Keratinocyte (primary cell): ENCODE measurements at regions of chr11 and their contacts with region 1.

Region 1: DNA sequence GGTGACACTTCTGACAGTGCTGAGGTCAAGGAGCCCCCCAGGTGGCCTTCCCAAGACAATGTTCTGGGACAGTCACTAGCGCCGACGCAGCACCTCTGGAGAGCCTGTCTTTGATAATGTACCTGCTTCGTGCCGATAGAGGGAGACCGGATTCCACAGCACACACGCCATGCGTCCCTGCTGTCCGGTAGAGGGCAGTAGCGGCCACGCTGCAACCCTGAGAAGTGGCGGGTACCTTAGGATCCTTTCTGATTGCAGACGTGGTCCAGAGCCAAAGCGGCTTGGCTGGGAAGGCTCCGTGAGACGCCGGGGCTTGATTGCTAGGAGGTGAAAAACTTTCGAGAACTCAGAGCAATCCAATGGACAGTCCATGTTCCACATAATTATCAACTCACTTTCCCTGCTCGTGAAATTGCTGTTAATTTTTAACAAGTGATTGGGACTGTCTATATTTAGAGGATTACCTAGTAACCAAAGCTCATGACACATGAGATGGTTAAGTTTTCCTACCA is 11.4 kb upstream of the BARX2 start:
- DNase-seq: peak; percentile 62
- H3K4me3 ChIP-seq: no peak overlapping the region
- H3K27ac ChIP-seq: no peak overlapping the region
- H3K4me1 ChIP-seq: peaks cover 10% of the 10 kb centered on the region
- H3K27me3 ChIP-seq: peaks cover 28% of the 10 kb centered on the region
- CTCF ChIP-seq: peak; percentile 100

Region 2: GRCh38 chr11:129223701-129224149 is 140.5 kb before region 1 on chr11:
- dilution Hi-C with region 1: no loop called
- DNase-seq: no peak
- H3K4me3 ChIP-seq: no peak overlapping the region
- H3K27ac ChIP-seq: no peak overlapping the region
- H3K4me1 ChIP-seq: peaks cover 16% of the 10 kb centered on the region
- H3K27me3 ChIP-seq: no peaks in the 10 kb centered on the region
- CTCF ChIP-seq: no peak

Region 3: DNA sequence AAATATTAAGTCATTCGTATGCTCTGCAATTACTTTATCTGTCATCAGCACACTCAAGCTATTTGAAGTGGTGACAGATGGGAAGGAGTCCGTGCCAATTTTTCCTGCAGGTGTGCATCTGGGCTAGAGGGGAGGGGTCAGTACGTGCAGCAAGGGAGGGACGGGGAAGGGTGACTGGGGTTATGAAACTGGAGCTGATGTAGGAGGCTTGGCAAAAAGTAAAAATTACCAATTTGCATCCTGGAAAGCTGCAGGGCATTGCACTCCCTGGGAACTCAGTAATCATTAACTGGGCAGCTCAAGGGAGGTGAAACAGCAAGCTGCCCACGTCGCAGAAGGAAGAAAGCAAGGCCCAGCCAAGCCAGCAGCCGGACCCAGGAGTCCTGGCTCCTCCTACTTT is 364.4 kb after region 1 on chr11:
- dilution Hi-C with region 1: loop called (anchors 25 kb)
- DNase-seq: no peak
- H3K4me3 ChIP-seq: no peak overlapping the region
- H3K27ac ChIP-seq: no peak overlapping the region
- H3K4me1 ChIP-seq: peaks cover 13% of the 10 kb centered on the region
- H3K27me3 ChIP-seq: peaks cover 9% of the 10 kb centered on the region
- CTCF ChIP-seq: no peak